Panc1 (cell line): ENCODE measurements at regions of chr1 and their contacts with region 1.

Region 1: GRCh38 chr1:247089616-247090375 is 11.2 kb upstream of the ZNF670 start:
- DNase-seq: no peak
- ATAC-seq: no peak; the same call in 1 of the 2 replicates
- H3K4me3 ChIP-seq: no peak overlapping the region
- H3K27ac ChIP-seq: no peak overlapping the region
- H3K4me1 ChIP-seq: no peaks in the 10 kb centered on the region
- H3K27me3 ChIP-seq: no peaks in the 10 kb centered on the region
- CTCF ChIP-seq: no peak

Region 2: DNA sequence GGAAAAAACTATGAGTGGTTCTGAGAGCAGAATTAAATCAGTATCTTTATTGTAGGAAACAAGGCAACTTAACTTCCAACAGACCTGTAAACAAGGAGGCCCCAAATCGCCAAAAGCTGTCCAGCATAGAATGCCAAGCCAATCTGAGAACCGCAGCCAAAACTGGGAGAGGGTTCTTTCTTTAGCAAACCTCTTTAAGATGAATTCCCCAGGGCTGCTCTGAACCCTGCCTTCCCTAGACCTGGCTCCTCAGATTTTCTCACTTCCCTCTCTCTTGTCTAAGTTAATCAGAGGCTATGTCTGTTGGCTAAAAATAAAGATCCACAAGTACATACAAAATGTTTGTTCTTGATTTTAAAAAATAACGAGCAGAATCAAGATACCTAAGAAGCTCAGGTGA is 724.1 kb before region 1 on chr1:
- CTCF ChIA-PET with region 1: no interaction called
- POLR2A ChIA-PET with region 1: interaction called, 13 read pairs
- in situ Hi-C with region 1: no loop called
- intact Hi-C with region 1: no loop called
- DNase-seq: no peak
- ATAC-seq: no peak
- H3K4me3 ChIP-seq: no peak overlapping the region
- H3K27ac ChIP-seq: no peak overlapping the region
- H3K4me1 ChIP-seq: no peaks in the 10 kb centered on the region
- H3K27me3 ChIP-seq: no peaks in the 10 kb centered on the region
- CTCF ChIP-seq: no peak

Region 3: GRCh38 chr1:246947255-246947654 is 142.5 kb before region 1 on chr1:
- CTCF ChIA-PET with region 1: no interaction called
- POLR2A ChIA-PET with region 1: no interaction called
- in situ Hi-C with region 1: no loop called
- intact Hi-C with region 1: no loop called
- DNase-seq: no peak
- ATAC-seq: 0 out of 2 replicates have a peak, but pooled peaks have one; percentile 44
- H3K4me3 ChIP-seq: no peak overlapping the region
- H3K27ac ChIP-seq: no peak overlapping the region
- H3K4me1 ChIP-seq: no peaks in the 10 kb centered on the region
- H3K27me3 ChIP-seq: no peaks in the 10 kb centered on the region
- CTCF ChIP-seq: no peak